Cardiac septum (tissue), 1 donor: ENCODE measurements at regions of chr1 and their contacts with region 1.

Region 1: DNA sequence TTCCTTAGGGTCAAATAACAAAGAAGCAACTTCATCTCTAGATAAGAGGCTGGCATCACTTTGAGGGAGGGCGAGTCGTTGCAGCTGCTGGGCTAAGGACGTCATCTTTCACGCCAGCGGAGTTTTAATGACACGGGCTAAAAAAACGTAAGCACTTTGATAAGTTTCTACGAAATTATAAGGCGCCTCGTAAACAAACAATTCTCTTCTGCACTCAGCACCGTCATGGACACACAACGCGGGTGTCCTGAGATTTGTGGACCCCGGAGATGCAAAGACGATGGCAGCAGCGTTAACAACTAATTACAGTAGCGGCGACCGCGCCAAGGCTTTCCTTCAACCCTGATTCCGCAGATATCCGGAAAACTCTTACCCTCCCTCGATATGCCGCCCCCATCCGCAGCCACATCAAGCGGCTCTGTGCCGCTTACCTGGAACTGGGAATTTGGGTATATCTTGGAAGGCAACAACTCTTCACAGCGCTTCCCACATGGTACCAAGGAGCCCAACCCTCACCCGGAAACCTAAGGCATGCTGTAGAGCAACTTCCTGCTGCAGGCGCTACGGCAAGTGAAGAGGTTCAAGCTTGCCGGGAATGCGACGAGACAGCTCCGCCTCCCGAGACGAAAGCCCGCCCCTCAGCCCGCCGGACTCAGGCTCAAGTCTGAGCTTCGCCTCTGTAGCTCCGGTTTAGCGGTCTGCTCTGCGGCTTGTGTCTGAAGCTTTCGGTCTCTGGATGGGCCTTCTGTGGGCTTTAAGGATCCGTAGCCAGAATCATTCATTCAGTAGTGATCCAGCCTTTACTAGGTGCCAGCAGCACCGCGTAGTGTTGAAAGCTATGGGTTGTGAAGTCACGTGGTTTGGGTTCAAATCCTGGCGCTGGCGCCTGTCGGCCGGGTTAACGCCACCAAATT is at the start of gene HEATR1:
- DNase-seq: peak; percentile 98
- total RNA-seq, gene HEATR1: 12.6 TPM

Region 2: GRCh38 chr1:236523701-236524141 is 80.5 kb before region 1 on chr1 and contains the start of gene LGALS8:
- intact Hi-C with region 1: no loop called
- DNase-seq: peak; percentile 95
- total RNA-seq, gene LGALS8: 77.6 TPM

Region 3: GRCh38 chr1:236685917-236686814 is 81.9 kb after region 1 on chr1 and contains the start of gene ACTN2:
- intact Hi-C with region 1: loop called (anchors 2 kb)
- DNase-seq: peak; percentile 86
- total RNA-seq, gene ACTN2: 3,389 TPM

Region 4: DNA sequence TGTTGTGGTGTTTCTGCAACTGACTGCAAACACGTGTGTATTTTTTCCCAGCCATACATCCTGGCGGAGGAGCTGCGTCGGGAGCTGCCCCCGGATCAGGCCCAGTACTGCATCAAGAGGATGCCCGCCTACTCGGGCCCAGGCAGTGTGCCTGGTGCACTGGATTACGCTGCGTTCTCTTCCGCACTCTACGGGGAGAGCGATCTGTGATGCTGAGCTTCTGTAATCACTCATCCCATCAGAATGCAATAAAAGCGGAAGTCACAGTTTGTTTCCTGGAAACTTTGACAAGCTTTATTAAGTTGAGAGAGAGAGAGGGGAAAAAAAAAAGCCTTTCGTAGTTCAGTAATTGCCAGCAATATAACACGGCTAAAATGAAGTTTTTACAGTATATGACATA is 158.2 kb after region 1 on chr1:
- intact Hi-C with region 1: loop called (anchors 10 kb)
- DNase-seq: no peak

Region 5: DNA sequence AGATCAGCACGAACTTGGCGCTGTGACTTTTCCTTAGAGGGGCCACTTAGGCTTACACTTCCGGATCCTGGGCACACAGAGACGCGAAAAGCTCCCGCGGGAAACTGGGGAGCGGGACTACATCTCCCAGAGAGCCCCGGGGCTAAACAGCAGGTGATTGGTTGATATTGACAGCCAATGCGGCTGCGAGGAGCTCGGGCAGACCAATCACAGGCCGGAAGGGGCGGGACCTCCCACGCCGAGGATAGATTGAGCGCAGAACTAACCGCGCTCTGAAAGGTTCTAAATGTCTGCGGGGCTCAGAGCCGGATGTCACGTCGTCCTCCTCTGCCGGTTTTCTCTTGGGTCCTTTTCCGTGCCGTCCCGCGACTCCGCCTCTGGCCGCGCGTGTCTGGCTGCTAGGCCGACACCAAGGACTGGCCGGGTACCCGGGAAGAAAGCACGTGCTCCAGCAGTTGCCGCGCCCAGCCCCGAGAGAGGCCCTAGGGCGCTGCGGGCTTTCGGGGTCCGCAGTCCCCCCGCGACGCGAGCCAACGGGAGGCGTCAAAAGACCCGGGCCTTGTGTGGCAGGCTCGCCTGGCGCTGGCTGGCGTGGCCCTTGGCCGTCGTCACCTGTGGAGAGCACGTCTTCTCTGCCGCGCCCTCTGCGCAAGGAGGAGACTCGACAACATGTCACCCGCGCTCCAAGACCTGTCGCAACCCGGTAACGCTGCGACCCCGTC is 190.9 kb after region 1 on chr1 and contains the start of gene MTR:
- intact Hi-C with region 1: loop called (anchors 10 kb)
- DNase-seq: peak; percentile 99
- total RNA-seq, gene MTR: 58.8 TPM

Region 6: DNA sequence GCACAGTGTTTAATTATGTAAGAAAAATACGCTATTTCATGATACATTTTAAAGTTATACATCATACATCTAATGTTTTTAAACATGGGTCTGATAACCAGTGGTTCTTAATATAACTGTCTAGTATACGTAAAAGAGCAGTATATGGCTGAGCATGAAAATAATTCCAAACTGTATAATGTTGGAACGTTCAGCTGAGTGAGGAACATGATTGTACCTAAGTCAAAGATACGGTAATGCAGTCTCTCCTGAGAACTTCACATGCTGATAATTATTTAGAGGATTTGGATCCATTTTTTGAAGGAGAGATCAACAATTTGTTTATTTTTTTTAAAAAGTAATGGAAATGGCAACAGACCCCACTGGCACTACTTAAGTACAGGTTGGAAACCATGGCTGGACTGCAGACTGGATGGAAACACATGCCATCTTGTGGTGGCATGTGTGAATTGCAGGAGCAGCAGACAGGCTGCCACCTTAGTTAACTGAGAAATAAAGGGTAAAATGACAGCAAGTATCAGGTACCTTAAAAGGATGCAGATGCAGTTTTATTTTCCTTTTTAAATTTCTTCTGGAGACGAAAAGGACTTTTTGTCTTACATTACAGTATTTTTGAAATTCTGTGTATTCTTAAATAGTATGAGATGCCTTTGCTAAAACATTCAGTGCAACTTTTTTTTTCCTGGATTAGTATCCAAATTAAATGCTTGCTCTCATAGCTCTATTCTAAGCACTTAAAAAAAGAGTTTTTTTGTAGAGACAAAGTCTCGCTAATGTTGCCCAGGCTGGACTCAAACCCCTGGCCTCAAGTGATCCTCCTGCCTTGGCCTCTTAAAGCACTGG is 264.6 kb after region 1 on chr1:
- intact Hi-C with region 1: loop called (anchors 10 kb)
- DNase-seq: no peak